Activated CD4-positive, alpha-beta memory T cell treated with anti-CD3 and anti-CD28 coated beads for 36 hours (primary cell): ENCODE measurements at regions of chr2 and their contacts with region 1.

Region 1: DNA sequence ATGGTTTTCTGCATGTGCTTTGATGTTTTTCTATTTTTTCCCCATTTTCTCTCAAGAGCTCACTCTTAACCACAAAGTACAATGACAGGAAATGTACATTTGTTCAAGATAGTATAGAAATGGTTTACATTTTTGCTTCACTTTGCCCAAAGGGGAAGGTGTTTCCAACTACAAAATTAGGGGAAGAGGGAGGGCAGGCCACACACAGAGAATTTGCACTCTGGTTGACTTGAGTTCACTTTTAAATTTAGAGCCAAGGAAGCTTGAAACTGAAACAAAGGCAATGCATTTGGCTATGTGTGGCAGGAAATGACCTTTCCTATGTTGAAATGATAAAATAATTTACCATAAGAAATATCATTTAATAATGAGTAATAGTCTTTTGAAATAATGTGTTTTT is 19.1 kb upstream of the VIT start:
- DNase-seq: no peak
- H3K4me3 Mint-ChIP-seq: no peak overlapping the region
- H3K27ac Mint-ChIP-seq: no peak overlapping the region
- H3K4me1 Mint-ChIP-seq: peaks cover 6% of the 10 kb centered on the region
- H3K27me3 Mint-ChIP-seq: peaks cover 32% of the 10 kb centered on the region

Region 2: DNA sequence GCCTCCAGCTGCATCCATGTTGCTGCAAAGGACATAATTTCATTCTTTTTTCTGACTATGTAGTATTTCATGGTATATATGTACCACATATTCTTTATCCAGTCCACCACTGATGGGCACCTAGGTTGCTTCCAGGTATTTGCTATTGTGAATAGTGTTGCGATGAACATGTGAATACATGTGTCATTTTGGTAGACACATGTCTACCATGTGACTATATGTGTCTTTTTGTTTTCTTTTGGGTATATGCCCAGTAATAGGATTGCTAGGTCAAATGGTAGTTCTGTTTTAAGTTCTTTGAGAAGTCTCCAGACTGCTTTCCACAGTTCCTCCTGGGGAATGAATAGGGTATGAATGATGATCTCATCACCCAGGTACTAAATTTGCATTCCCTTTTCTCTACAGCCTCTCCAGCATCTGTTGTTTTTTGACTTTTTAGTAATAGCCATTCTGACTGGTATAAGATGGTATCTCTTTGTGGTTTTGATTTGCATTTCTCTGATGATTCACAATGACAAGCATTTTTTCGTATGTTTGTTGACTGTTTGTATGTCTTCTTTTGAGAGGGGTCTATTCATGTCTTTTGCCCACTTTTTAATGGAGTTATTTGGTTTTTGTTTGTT is 43.8 kb before region 1 on chr2:
- CTCF ChIA-PET with region 1: no interaction called
- POLR2A ChIA-PET with region 1: no interaction called
- intact Hi-C with region 1: no loop called
- DNase-seq: no peak
- H3K4me3 Mint-ChIP-seq: no peak overlapping the region
- H3K27ac Mint-ChIP-seq: no peak overlapping the region
- H3K4me1 Mint-ChIP-seq: no peaks in the 10 kb centered on the region
- H3K27me3 Mint-ChIP-seq: peaks cover 9% of the 10 kb centered on the region

Region 3: GRCh38 chr2:36663851-36664695 is 13.3 kb before region 1 on chr2:
- CTCF ChIA-PET with region 1: interaction called, 14 read pairs
- POLR2A ChIA-PET with region 1: no interaction called
- intact Hi-C with region 1: no loop called
- DNase-seq: peak; percentile 14
- H3K4me3 Mint-ChIP-seq: no peak overlapping the region
- H3K27ac Mint-ChIP-seq: no peak overlapping the region
- H3K4me1 Mint-ChIP-seq: no peaks in the 10 kb centered on the region
- H3K27me3 Mint-ChIP-seq: peaks cover 13% of the 10 kb centered on the region